Endothelial cell of umbilical vein (primary cell): ENCODE measurements at regions of chr3 and their contacts with region 1.

Region 1: DNA sequence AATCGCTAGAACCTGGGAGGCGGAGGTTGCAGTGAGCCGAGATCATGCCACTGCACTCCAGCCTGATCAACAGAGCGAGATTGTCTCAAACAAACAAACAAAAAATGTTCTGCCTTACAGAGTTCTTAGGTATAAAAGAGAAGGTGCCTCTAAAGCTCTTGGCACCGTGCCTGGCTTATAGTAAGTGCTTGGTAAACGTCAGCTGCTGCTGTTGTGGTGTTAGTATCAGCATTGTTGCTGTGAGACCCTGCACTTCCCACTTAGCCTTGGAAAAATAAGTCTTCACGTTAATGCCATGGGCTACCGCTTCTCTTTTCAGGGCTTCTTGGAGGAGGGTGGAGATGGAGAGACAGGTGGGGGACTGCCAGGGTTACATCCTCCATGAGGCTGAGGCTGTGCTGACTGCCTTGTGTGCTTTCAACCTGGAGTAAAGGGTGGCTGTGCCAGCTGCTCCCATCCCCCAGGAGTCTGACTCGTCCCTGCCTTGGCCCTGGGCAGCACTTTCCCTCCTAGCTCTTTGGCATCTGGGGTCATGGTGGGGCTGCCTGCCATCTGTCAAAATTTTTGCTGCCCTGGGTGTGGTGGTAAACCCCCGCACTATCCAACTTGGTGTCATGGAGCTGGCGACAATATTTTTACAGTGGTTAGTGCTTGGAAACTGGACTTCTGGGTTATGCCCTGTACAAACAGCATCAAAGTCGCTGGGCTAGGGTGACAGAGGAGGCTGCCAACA is 17.8 kb downstream of the FLNB start:
- DNase-seq: peak; percentile 79
- H3K4me3 ChIP-seq: no peak overlapping the region
- H3K27ac ChIP-seq: peak overlapping the region; percentile 37
- H3K4me1 ChIP-seq: peaks cover 48% of the 10 kb centered on the region
- H3K27me3 ChIP-seq: no peaks in the 10 kb centered on the region
- CTCF ChIP-seq: no peak
- POLR2A ChIP-seq: no peak

Region 2: GRCh38 chr3:57961828-57962447 is 64.1 kb before region 1 on chr3:
- CTCF ChIA-PET with region 1: interaction called, 13 read pairs
- POLR2A ChIA-PET with region 1: interaction called, 3 read pairs
- dilution Hi-C with region 1: no loop called
- intact Hi-C with region 1: no loop called
- DNase-seq: peak; percentile 58
- H3K4me3 ChIP-seq: no peak overlapping the region
- H3K27ac ChIP-seq: no peak overlapping the region
- H3K4me1 ChIP-seq: peaks cover 17% of the 10 kb centered on the region
- H3K27me3 ChIP-seq: no peaks in the 10 kb centered on the region
- CTCF ChIP-seq: peak; percentile 30 to 65
- POLR2A ChIP-seq: no peak

Region 3: GRCh38 chr3:58041654-58042324 is 15.8 kb after region 1 on chr3:
- CTCF ChIA-PET with region 1: interaction called, 4 read pairs
- POLR2A ChIA-PET with region 1: interaction called, 4 read pairs
- dilution Hi-C with region 1: no loop called
- intact Hi-C with region 1: loop called (anchors 2 kb)
- DNase-seq: peak; percentile 54
- H3K4me3 ChIP-seq: no peak overlapping the region
- H3K27ac ChIP-seq: peak overlapping the region; percentile 67
- H3K4me1 ChIP-seq: peaks cover 69% of the 10 kb centered on the region
- H3K27me3 ChIP-seq: no peaks in the 10 kb centered on the region
- CTCF ChIP-seq: no peak
- POLR2A ChIP-seq: no peak